CD4-positive, alpha-beta T cell (primary cell): ENCODE measurements at regions of chr2 and their contacts with region 1.

Region 1: GRCh38 chr2:171703574-171704347 is 16.5 kb downstream of the DYNC1I2 start:
- DNase-seq: peak in 4 of 14 experiments; percentile 5 to 59 (median 50)
- ATAC-seq: peak; percentile 52
- H3K4me3 ChIP-seq: no peak overlapping the region
- H3K4me3 Mint-ChIP-seq: no peak overlapping the region
- H3K27ac ChIP-seq: no peak overlapping the region
- H3K27ac Mint-ChIP-seq: peak overlapping the region; percentile 11
- H3K4me1 ChIP-seq: no peaks in the 10 kb centered on the region
- H3K4me1 Mint-ChIP-seq: peaks cover 17% of the 10 kb centered on the region
- H3K27me3 ChIP-seq: no peaks in the 10 kb centered on the region
- H3K27me3 Mint-ChIP-seq: no peaks in the 10 kb centered on the region
- CTCF ChIP-seq: peak; percentile 50

Region 2: GRCh38 chr2:171574149-171574795 is 129.5 kb before region 1 on chr2:
- CTCF ChIA-PET with region 1: interaction called, 3 read pairs
- POLR2A ChIA-PET with region 1: no interaction called
- intact Hi-C with region 1: loop called (anchors 10 kb)
- DNase-seq: peak; percentile 67 to 88 (median 76)
- ATAC-seq: peak; percentile 99
- H3K4me3 ChIP-seq: no peak overlapping the region
- H3K4me3 Mint-ChIP-seq: no peak overlapping the region
- H3K27ac ChIP-seq: no peak overlapping the region
- H3K27ac Mint-ChIP-seq: peak overlapping the region; percentile 54
- H3K4me1 ChIP-seq: peaks cover 6% of the 10 kb centered on the region
- H3K4me1 Mint-ChIP-seq: peaks cover 6% of the 10 kb centered on the region
- H3K27me3 ChIP-seq: no peaks in the 10 kb centered on the region
- H3K27me3 Mint-ChIP-seq: no peaks in the 10 kb centered on the region
- CTCF ChIP-seq: peak; percentile 92

Region 3: GRCh38 chr2:171811245-171811628 is 107.5 kb after region 1 on chr2:
- CTCF ChIA-PET with region 1: interaction called, 3 read pairs
- POLR2A ChIA-PET with region 1: no interaction called
- intact Hi-C with region 1: loop called in 1 of 2 experiments (anchors 5 kb)
- DNase-seq: peak in 3 of 14 experiments; percentile 23 to 31 (median 24)
- ATAC-seq: no peak
- H3K4me3 ChIP-seq: no peak overlapping the region
- H3K4me3 Mint-ChIP-seq: no peak overlapping the region
- H3K27ac ChIP-seq: no peak overlapping the region
- H3K27ac Mint-ChIP-seq: no peak overlapping the region
- H3K4me1 ChIP-seq: no peaks in the 10 kb centered on the region
- H3K4me1 Mint-ChIP-seq: no peaks in the 10 kb centered on the region
- H3K27me3 ChIP-seq: no peaks in the 10 kb centered on the region
- H3K27me3 Mint-ChIP-seq: no peaks in the 10 kb centered on the region
- CTCF ChIP-seq: peak; percentile 37

Region 4: GRCh38 chr2:172128484-172128883 is 424.7 kb after region 1 on chr2:
- CTCF ChIA-PET with region 1: no interaction called
- POLR2A ChIA-PET with region 1: no interaction called
- intact Hi-C with region 1: loop called in 1 of 2 experiments (anchors 5 kb)
- DNase-seq: no peak
- ATAC-seq: no peak
- H3K4me3 ChIP-seq: no peak overlapping the region
- H3K4me3 Mint-ChIP-seq: no peak overlapping the region
- H3K27ac ChIP-seq: no peak overlapping the region
- H3K27ac Mint-ChIP-seq: no peak overlapping the region
- H3K4me1 ChIP-seq: no peaks in the 10 kb centered on the region
- H3K4me1 Mint-ChIP-seq: no peaks in the 10 kb centered on the region
- H3K27me3 ChIP-seq: peaks cover 0 to 2% of the 10 kb centered on the region in 2 experiments
- H3K27me3 Mint-ChIP-seq: no peaks in the 10 kb centered on the region
- CTCF ChIP-seq: no peak

Region 5: GRCh38 chr2:172208791-172209325 is 505.1 kb after region 1 on chr2:
- CTCF ChIA-PET with region 1: no interaction called
- POLR2A ChIA-PET with region 1: no interaction called
- intact Hi-C with region 1: no loop called
- DNase-seq: no peak
- ATAC-seq: no peak
- H3K4me3 ChIP-seq: no peak overlapping the region
- H3K4me3 Mint-ChIP-seq: no peak overlapping the region
- H3K27ac ChIP-seq: no peak overlapping the region
- H3K27ac Mint-ChIP-seq: no peak overlapping the region
- H3K4me1 ChIP-seq: peaks cover 3% of the 10 kb centered on the region
- H3K4me1 Mint-ChIP-seq: peaks cover 18% of the 10 kb centered on the region
- H3K27me3 ChIP-seq: no peaks in the 10 kb centered on the region
- H3K27me3 Mint-ChIP-seq: peaks cover 4% of the 10 kb centered on the region
- CTCF ChIP-seq: no peak

Region 6: GRCh38 chr2:172674034-172674967 is 970.5 kb after region 1 on chr2:
- CTCF ChIA-PET with region 1: interaction called, 3 read pairs
- POLR2A ChIA-PET with region 1: no interaction called
- intact Hi-C with region 1: loop called in 1 of 2 experiments (anchors 10 kb)
- DNase-seq: peak in 12 of 14 experiments; percentile 5 to 59 (median 22)
- ATAC-seq: peak; percentile 41
- H3K4me3 ChIP-seq: peak overlapping the region; percentile 21
- H3K4me3 Mint-ChIP-seq: peak overlapping the region; percentile 31
- H3K27ac ChIP-seq: no peak overlapping the region
- H3K27ac Mint-ChIP-seq: no peak overlapping the region
- H3K4me1 ChIP-seq: peaks cover 5% of the 10 kb centered on the region
- H3K4me1 Mint-ChIP-seq: no peaks in the 10 kb centered on the region
- H3K27me3 ChIP-seq: no peaks in the 10 kb centered on the region
- H3K27me3 Mint-ChIP-seq: peaks cover 8% of the 10 kb centered on the region
- CTCF ChIP-seq: peak; percentile 59